PC-9 (cell line): ENCODE measurements at regions of chr12 and their contacts with region 1.

Region 1: DNA sequence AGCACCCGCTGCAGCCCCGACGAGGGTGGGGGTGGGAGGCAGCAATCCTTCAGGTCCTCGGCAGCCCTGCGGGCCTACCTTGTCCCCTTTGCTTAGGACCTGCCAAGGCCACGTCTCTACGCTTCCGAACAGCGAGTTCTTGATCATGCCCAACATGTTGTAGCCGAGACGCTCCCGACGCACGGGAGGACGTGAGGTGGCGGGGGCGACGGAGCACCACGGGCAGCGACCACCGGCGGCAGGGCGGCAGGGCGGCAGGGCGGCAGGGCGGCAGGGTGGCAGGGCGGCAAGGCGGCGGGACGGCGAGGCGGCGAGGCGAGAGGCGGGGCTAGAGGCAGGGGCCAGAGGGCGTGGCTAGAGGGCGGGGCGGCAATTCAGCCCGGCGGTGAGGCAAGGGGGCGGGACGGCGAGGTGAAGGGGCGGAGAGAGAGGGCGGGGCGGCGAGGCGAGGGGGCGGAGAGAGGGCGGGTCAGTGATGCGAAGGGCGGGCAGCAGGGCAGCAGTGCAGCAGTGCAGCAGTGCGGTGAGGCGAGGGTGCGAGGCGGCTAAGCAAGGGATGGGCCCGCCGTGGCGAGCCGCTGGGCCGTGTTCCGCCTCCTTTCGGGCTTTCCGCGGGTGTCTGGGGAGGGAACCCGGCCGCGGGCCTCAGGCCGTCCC is at the start of gene HEBP1:
- DNase-seq: peak; percentile 64 to 98
- H3K4me3 ChIP-seq: peak within 1 kb of the TSS; percentile 99
- H3K27ac ChIP-seq: peak within 1 kb of the TSS; percentile 85
- H3K4me1 ChIP-seq: peaks cover 18% of the 10 kb centered on the region
- H3K27me3 ChIP-seq: no peaks in the 10 kb centered on the region
- CTCF ChIP-seq: no peak; the same call in 1 of the 2 replicates
- total RNA-seq, gene HEBP1: 148 and 195 TPM in 2 replicates

Region 2: GRCh38 chr12:12684375-12685106 is 315.5 kb before region 1 on chr12:
- CTCF ChIA-PET with region 1: no interaction called
- POLR2A ChIA-PET with region 1: no interaction called
- intact Hi-C with region 1: no loop called
- DNase-seq: peak in 1 of 2 experiments; percentile 25
- H3K4me3 ChIP-seq: no peak overlapping the region
- H3K27ac ChIP-seq: no peak overlapping the region
- H3K4me1 ChIP-seq: no peaks in the 10 kb centered on the region
- H3K27me3 ChIP-seq: no peaks in the 10 kb centered on the region
- CTCF ChIP-seq: no peak

Region 3: GRCh38 chr12:12975322-12976077 is 24.6 kb before region 1 on chr12:
- CTCF ChIA-PET with region 1: interaction called, 11 read pairs
- POLR2A ChIA-PET with region 1: interaction called, 7 read pairs
- intact Hi-C with region 1: no loop called
- DNase-seq: peak in 1 of 2 experiments; percentile 66
- H3K4me3 ChIP-seq: no peak overlapping the region
- H3K27ac ChIP-seq: peak overlapping the region; percentile 66
- H3K4me1 ChIP-seq: peaks cover 36% of the 10 kb centered on the region
- H3K27me3 ChIP-seq: no peaks in the 10 kb centered on the region
- CTCF ChIP-seq: peak; percentile 48

Region 4: DNA sequence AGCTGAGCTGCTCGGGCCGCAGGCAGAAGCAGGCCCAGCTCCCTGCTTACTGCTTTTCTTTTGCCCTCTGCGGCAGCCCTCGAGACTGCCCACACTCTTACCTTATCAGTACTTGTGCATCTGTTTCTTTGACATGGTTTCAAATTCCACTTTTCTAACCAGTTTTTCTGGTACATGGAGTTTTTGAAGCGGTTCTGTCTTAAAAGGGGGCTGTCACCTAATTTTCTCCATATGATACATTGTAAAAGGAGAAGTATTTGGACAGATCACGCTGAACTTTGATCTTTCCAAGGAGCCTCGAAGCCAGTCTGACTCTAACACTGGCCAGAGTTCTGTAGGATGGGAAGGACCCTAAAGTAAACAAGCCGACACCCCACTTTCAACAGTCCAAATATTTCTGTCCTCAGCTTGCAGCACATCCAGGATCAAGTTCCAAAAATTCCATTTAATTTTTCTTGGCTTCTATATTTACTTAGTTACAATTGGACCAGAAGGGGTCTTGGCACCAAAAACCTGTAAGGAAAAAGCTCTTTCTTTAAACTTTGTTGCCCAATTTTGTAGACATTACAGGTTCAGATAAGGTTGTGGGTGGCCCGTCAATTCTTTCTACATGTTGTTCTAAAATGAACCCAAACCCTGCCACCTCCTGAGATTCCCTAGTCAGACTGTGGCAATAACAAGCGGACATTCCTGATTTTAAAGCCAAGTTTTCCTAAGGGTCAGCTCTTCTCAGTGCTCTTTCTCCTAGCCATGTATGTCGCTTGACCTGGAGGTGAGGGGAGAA is 148.2 kb after region 1 on chr12:
- CTCF ChIA-PET with region 1: no interaction called
- POLR2A ChIA-PET with region 1: interaction called, 32 read pairs
- intact Hi-C with region 1: no loop called
- DNase-seq: peak; percentile 68 to 84
- H3K4me3 ChIP-seq: no peak overlapping the region
- H3K27ac ChIP-seq: peak overlapping the region; percentile 43
- H3K4me1 ChIP-seq: peaks cover 38% of the 10 kb centered on the region
- H3K27me3 ChIP-seq: no peaks in the 10 kb centered on the region
- CTCF ChIP-seq: no peak

Region 5: DNA sequence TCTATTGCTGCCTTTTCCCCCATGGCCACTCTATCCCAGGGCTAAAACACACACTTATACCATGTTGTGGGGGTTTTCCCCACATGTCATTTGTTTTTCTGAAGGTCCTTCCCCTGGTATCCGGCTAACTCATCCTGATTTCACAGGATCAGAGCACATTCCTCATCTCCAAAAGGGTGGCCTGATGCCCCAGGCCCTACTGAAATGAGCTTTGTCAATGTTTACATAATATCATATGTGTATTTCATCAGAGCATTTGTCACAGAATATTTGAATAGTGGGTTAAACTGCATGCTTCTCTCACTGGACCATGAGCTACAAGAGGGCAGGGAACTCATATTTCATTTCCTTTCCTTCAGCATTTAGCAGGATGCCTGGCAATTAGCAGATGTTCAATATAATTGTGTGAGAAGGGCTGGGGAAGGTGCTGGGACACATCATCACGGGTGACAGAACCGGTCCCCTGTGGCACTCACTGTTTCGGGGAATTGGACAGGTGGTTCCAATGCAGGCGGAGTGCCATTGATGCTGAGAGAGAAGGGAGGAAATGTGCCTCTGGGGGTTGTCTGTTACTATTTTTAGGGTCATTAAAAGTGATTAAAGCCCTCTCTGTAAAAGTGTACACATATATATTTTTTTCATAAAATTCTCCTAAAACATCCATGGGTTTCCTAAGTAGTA is 223.2 kb after region 1 on chr12:
- CTCF ChIA-PET with region 1: no interaction called
- POLR2A ChIA-PET with region 1: no interaction called
- intact Hi-C with region 1: loop called (anchors 1 kb)
- DNase-seq: peak; percentile 71 to 95
- H3K4me3 ChIP-seq: no peak overlapping the region
- H3K27ac ChIP-seq: peak overlapping the region; percentile 96
- H3K4me1 ChIP-seq: peaks cover 46% of the 10 kb centered on the region
- H3K27me3 ChIP-seq: no peaks in the 10 kb centered on the region
- CTCF ChIP-seq: no peak

Region 6: GRCh38 chr12:13941258-13942249 is 941.5 kb after region 1 on chr12:
- CTCF ChIA-PET with region 1: no interaction called
- POLR2A ChIA-PET with region 1: no interaction called
- intact Hi-C with region 1: loop called (anchors 10 kb)
- DNase-seq: peak; percentile 53 to 68
- H3K4me3 ChIP-seq: no peak overlapping the region
- H3K27ac ChIP-seq: no peak overlapping the region
- H3K4me1 ChIP-seq: no peaks in the 10 kb centered on the region; the same call in 1 of the 2 replicates
- H3K27me3 ChIP-seq: no peaks in the 10 kb centered on the region
- CTCF ChIP-seq: peak; percentile 61